CD4-positive, alpha-beta T cell (primary cell): ENCODE measurements at regions of chr21 and their contacts with region 1.

Region 1: DNA sequence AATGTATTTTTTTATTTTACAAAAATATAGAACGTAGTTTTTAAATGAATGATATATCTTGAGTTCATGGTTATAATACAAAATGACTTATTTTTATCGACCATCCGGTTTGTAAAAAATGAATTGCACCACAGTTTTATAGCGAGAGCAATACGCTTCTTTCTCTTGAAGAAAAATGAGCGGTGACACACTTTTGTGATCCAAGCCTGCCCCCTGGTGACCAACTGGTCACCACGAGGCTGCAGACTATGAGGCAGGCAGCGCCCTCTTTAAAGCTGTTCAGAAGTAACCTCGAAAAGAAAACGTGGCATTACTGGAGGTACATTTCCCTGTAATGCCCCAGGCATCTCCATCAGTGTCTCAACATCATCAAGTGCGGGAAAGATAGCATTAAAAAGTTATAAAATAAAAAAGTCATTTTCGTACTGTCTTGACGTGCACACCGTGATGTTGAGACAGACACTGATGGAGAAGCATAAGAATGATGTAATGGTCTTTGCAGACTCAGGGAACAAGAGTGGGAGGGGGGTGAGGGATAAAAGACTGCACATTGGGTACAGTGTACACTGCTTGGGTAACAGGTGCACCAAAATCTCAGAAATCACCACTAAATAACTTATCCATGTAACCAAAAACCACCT is 734.2 kb upstream of the ADAMTS5 start:
- DNase-seq: peak; percentile 1 to 63 (median 26)
- ATAC-seq: peak; percentile 57
- H3K4me3 ChIP-seq: no peak overlapping the region
- H3K4me3 Mint-ChIP-seq: no peak overlapping the region
- H3K27ac ChIP-seq: no peak overlapping the region
- H3K27ac Mint-ChIP-seq: no peak overlapping the region
- H3K4me1 ChIP-seq: no peaks in the 10 kb centered on the region
- H3K4me1 Mint-ChIP-seq: no peaks in the 10 kb centered on the region
- H3K27me3 ChIP-seq: no peaks in the 10 kb centered on the region
- H3K27me3 Mint-ChIP-seq: no peaks in the 10 kb centered on the region
- CTCF ChIP-seq: peak; percentile 37

Region 2: GRCh38 chr21:26845066-26845758 is 855.9 kb before region 1 on chr21 and contains the start of gene ADAMTS1:
- CTCF ChIA-PET with region 1: no interaction called
- POLR2A ChIA-PET with region 1: no interaction called
- intact Hi-C with region 1: loop called (anchors 1 to 5 kb)
- DNase-seq: peak in 3 of 14 experiments; percentile 16 to 21 (median 21)
- ATAC-seq: no peak
- H3K4me3 ChIP-seq: peak within 1 kb of the TSS; percentile 37
- H3K4me3 Mint-ChIP-seq: peak within 1 kb of the TSS; percentile 84
- H3K27ac ChIP-seq: no peak within 1 kb of the TSS
- H3K27ac Mint-ChIP-seq: no peak within 1 kb of the TSS
- H3K4me1 ChIP-seq: peaks cover 40% of the 10 kb centered on the region
- H3K4me1 Mint-ChIP-seq: peaks cover 35% of the 10 kb centered on the region
- H3K27me3 ChIP-seq: peaks cover 41 to 60% of the 10 kb centered on the region in 2 experiments
- H3K27me3 Mint-ChIP-seq: peaks cover 81% of the 10 kb centered on the region
- CTCF ChIP-seq: no peak
- total RNA-seq, gene ADAMTS1: 0.08 to 0.25 TPM

Region 3: GRCh38 chr21:27590271-27590670 is 110.8 kb before region 1 on chr21:
- CTCF ChIA-PET with region 1: no interaction called
- POLR2A ChIA-PET with region 1: no interaction called
- intact Hi-C with region 1: no loop called
- DNase-seq: no peak
- ATAC-seq: no peak
- H3K4me3 ChIP-seq: no peak overlapping the region
- H3K4me3 Mint-ChIP-seq: no peak overlapping the region
- H3K27ac ChIP-seq: no peak overlapping the region
- H3K27ac Mint-ChIP-seq: no peak overlapping the region
- H3K4me1 ChIP-seq: no peaks in the 10 kb centered on the region
- H3K4me1 Mint-ChIP-seq: no peaks in the 10 kb centered on the region
- H3K27me3 ChIP-seq: no peaks in the 10 kb centered on the region
- H3K27me3 Mint-ChIP-seq: no peaks in the 10 kb centered on the region
- CTCF ChIP-seq: no peak